ENCODE measurements at regions of chr5 and their contacts with region 1.

Region 1: DNA sequence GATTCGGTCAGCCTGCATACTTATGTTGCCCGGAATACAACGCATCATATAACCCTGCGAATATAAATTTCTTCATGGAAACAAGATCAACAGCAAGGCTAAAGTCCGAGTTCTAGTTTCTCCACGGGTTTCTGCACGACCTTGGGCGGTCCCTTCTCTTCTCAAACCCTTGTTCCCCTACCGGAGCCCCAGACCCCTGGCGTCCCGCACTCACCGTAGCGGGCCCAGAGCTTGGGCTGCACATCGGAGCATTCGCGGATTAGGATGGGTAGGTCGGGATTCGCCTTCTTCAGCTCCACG is 438 bp downstream of the NDUFA2 start:
- DNase-seq: no peak
- ATAC-seq: no peak
- H3K4me3 Mint-ChIP-seq: peak overlapping the region; percentile 95
- H3K27ac Mint-ChIP-seq: peak overlapping the region; percentile 99
- H3K4me1 Mint-ChIP-seq: peaks cover 36% of the 10 kb centered on the region
- H3K27me3 Mint-ChIP-seq: no peaks in the 10 kb centered on the region
- CTCF ChIP-seq: no peak

Region 2: DNA sequence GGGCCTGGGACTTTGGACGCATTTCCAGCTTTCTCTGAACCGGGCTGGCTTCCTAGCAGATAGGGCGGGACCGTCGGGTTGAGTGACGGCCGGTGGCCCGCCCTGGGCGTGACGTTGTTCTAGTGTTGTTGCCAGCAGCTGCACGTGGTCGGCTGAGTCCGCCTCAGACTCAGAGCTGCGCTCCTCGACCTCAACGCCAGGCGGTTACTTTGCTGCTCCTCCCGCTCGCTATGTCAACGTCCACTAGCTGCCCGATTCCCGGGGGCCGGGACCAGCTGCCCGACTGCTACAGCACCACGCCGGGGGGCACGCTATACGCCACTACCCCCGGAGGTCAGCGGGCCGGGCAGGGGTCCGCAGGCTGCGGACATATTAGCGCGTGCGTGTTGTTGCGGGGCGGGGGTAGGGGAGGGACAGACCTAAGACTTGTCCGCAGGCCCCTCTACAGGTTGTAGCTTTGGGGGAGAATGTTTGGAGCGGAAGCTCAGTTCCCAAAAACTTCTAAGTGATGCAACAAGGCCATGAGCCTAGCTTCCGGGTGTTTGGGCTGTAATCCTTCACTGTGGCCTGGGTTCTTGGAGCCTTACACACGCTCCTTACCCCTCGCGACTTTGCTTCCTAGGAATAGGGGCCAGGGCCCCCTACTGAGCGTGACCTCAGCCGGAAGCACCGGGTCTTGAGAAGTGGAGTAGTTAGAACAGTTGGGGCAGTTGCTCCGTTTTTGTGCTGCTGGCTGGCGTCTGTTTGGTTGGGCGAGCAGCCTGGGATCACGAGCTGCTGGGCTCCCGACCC is 99.3 kb before region 1 on chr5 and contains the start of gene EIF4EBP3:
- CTCF ChIA-PET with region 1: interaction called, 4 read pairs
- POLR2A ChIA-PET with region 1: interaction called, 15 read pairs
- intact Hi-C with region 1: no loop called
- DNase-seq: peak; percentile 94
- ATAC-seq: peak; percentile 97
- H3K4me3 Mint-ChIP-seq: peak within 1 kb of the TSS; percentile 89
- H3K27ac Mint-ChIP-seq: peak within 1 kb of the TSS; percentile 98
- H3K4me1 Mint-ChIP-seq: peaks cover 41% of the 10 kb centered on the region
- H3K27me3 Mint-ChIP-seq: no peaks in the 10 kb centered on the region
- CTCF ChIP-seq: peak; percentile 84
- total RNA-seq, gene EIF4EBP3: 19.6 to 20.3 TPM

Region 3: GRCh38 chr5:140564196-140565023 is 82.6 kb before region 1 on chr5 and contains the starts of genes APBB3 and SLC35A4:
- CTCF ChIA-PET with region 1: no interaction called
- POLR2A ChIA-PET with region 1: interaction called, 15 read pairs
- intact Hi-C with region 1: no loop called
- DNase-seq: peak; percentile 97
- ATAC-seq: peak; percentile 95
- H3K4me3 Mint-ChIP-seq: peak within 1 kb of the TSS; percentile 88
- H3K27ac Mint-ChIP-seq: peak within 1 kb of the TSS; percentile 90
- H3K4me1 Mint-ChIP-seq: peaks cover 54% of the 10 kb centered on the region
- H3K27me3 Mint-ChIP-seq: no peaks in the 10 kb centered on the region
- CTCF ChIP-seq: no peak
- total RNA-seq, gene APBB3: 24.9 TPM
- total RNA-seq, gene SLC35A4: 72.9 to 73.6 TPM

Region 4: DNA sequence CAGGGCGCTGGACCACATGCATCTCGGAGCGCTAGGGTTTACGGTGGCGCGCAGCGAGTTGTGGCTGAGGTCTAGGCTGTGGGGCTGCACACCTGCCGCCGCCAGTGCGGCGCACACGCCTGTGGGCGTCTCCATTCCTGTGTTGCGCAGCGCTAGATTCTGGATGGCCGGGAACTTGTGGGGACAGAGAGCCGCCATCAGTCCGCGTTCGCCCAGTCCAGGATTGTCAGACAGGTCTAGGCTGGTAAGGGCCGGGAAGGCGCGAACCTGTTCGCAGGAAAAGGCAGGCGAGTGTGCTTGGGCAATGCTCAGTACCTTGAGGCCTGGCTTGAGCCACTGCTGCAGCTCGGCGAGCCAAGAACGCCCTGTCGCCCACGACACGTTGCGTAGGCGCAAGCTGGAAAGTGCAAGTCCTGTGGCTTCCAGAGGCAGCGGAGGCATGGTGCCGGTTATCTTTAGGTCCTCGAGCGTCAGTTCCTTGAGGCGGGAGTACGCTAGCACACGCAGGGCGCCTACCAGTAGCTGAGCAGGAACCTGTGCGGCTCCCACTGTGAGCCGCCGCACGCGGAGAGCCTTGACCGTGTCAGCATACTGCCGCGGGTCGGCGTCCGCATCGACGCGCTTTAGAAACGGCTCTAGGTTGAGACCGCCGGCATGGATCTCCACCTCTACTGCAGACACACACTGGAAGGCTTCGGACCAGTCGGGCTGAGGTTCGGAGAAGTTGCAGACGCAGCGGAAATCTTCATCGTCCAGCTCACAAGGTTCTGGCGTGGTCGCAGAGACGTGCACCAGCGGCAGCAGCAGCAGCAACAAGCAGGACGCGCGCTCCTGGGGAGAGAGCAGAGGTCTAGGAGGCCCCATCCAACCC is 14.6 kb before region 1 on chr5:
- CTCF ChIA-PET with region 1: interaction called, 10 read pairs
- POLR2A ChIA-PET with region 1: interaction called, 16 read pairs
- intact Hi-C with region 1: no loop called
- DNase-seq: peak; percentile 68
- ATAC-seq: peak; percentile 65
- H3K4me3 Mint-ChIP-seq: peak overlapping the region; percentile 74
- H3K27ac Mint-ChIP-seq: peak overlapping the region; percentile 71
- H3K4me1 Mint-ChIP-seq: peaks cover 28% of the 10 kb centered on the region
- H3K27me3 Mint-ChIP-seq: peaks cover 17% of the 10 kb centered on the region
- CTCF ChIP-seq: no peak

Region 5: GRCh38 chr5:140664359-140665119 is 17.5 kb after region 1 on chr5 and contains the start of gene WDR55:
- CTCF ChIA-PET with region 1: interaction called, 4 read pairs
- POLR2A ChIA-PET with region 1: interaction called, 37 read pairs
- intact Hi-C with region 1: no loop called
- DNase-seq: peak; percentile 97
- ATAC-seq: peak; percentile 96
- H3K4me3 Mint-ChIP-seq: peak within 1 kb of the TSS; percentile 99
- H3K27ac Mint-ChIP-seq: peak within 1 kb of the TSS; percentile 95
- H3K4me1 Mint-ChIP-seq: peaks cover 26% of the 10 kb centered on the region
- H3K27me3 Mint-ChIP-seq: no peaks in the 10 kb centered on the region
- CTCF ChIP-seq: no peak
- total RNA-seq, gene WDR55: 30.1 to 31.8 TPM

Region 6: GRCh38 chr5:140672455-140673186 is 25.6 kb after region 1 on chr5:
- CTCF ChIA-PET with region 1: no interaction called
- POLR2A ChIA-PET with region 1: interaction called, 11 read pairs
- intact Hi-C with region 1: no loop called
- DNase-seq: peak; percentile 33
- ATAC-seq: no peak
- H3K4me3 Mint-ChIP-seq: no peak overlapping the region
- H3K27ac Mint-ChIP-seq: no peak overlapping the region
- H3K4me1 Mint-ChIP-seq: peaks cover 4% of the 10 kb centered on the region
- H3K27me3 Mint-ChIP-seq: no peaks in the 10 kb centered on the region
- CTCF ChIP-seq: no peak

Region 7: DNA sequence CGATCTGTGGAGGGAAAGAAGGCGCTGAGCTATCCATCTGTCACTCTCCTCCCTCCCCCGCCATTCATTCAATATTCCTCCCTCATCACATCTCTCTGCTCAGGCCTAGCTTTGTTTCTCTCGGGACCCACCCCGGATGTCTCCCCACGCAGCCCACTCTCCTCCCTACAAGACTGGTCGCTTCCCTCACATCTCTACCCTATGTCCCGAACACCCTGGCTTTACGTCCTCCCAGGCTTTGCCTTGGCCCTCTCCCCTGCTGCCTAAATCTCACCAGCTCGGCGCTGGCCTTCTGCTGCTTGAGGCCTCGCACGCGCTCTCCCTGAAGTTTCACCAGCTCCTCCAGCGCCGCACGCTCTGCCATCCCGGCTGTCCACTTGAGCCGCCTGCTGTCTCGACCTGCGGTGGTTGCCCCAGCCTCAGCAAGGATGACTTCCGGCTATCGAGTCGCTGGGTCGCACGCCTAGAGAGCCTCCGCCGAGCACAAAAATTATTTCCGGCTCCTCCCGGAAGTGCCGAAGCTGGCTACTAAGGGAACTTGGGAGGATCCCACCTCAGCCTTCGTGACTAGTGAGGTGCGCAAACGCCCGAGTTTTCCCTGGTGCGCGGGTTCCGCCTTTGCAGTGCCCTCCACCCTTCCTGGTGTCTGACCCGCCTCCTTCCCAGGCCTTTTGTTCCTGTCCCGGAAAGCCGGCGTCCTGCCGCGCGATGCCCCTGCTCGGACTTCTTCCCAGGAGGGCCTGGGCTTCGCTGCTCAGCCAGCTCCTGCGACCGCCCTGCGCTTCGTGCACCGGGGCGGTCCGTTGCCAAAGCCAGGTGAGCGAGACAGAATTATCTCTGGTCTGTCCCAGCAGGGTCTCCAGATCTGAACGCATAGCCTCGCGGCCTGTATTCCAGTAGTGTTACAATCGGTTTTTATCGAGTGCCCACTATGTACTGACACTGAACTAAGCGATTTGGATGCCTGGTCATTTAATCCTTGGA is 44.2 kb after region 1 on chr5 and contains the starts of genes HARS1 and HARS2:
- CTCF ChIA-PET with region 1: interaction called, 6 read pairs
- POLR2A ChIA-PET with region 1: interaction called, 29 read pairs
- intact Hi-C with region 1: loop called (anchors 5 kb)
- DNase-seq: peak; percentile 89
- ATAC-seq: peak; percentile 94
- H3K4me3 Mint-ChIP-seq: peak within 1 kb of the TSS; percentile 99
- H3K27ac Mint-ChIP-seq: peak within 1 kb of the TSS; percentile 97
- H3K4me1 Mint-ChIP-seq: peaks cover 34% of the 10 kb centered on the region
- H3K27me3 Mint-ChIP-seq: no peaks in the 10 kb centered on the region
- CTCF ChIP-seq: no peak
- total RNA-seq, gene HARS1: 84.5 to 84.9 TPM
- total RNA-seq, gene HARS2: 26.1 TPM

Region 8: GRCh38 chr5:140764177-140765020 is 117.4 kb after region 1 on chr5:
- CTCF ChIA-PET with region 1: no interaction called
- POLR2A ChIA-PET with region 1: no interaction called
- intact Hi-C with region 1: no loop called
- DNase-seq: no peak
- ATAC-seq: no peak
- H3K4me3 Mint-ChIP-seq: no peak overlapping the region
- H3K27ac Mint-ChIP-seq: no peak overlapping the region
- H3K4me1 Mint-ChIP-seq: no peaks in the 10 kb centered on the region
- H3K27me3 Mint-ChIP-seq: no peaks in the 10 kb centered on the region
- CTCF ChIP-seq: no peak